ENCODE measurements at regions of chr11 and their contacts with region 1.

Region 1: DNA sequence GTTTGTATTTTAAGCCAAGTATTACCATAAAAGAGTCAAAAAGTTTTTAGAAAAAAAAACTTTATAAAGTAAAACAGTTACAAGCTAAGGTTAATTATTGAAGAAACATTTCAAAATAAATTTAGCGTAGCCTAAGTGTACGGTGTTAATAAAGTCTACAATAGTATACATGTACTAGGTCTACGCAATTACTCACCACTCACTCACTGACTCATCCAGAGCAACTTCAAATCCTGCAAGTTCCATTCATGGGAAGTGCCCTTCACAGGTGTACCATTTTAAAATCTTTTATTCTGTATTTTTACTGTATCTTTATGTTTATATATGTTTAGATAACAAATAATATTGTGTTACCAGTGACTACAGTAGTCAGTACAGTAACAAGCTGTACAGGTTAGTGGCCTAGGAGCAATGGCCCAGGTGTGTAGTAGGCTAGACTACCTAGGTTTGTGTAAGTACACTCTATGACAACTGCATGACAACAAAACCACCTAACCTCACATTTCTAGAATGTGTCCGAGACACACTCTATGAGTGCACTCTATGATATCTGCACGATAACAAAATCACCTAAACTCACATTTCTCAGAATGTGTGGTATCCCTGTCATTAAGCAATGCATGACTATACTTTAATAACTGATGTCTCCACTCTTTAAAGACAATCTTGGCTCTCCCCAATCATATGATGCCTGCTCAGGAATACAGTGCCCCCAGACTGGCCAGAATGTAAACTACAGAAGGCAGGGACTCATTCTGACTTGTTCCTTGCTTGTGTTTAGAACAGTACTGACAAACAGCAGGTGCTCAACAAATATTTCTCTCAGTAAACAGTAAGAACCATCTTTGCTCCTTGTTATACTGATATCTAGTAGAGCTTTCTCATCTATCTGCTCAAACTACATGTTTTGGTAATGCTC is 21.2 kb downstream of the KMT5B start:
- DNase-seq: no peak
- H3K4me3 ChIP-seq: no peak overlapping the region
- H3K27ac ChIP-seq: no peak overlapping the region
- H3K4me1 ChIP-seq: no peaks in the 10 kb centered on the region; a peak in 1 of 4 replicates
- H3K27me3 ChIP-seq: no peaks in the 10 kb centered on the region
- CTCF ChIP-seq: no peak
- EP300 ChIP-seq: no peak
- RAD21 ChIP-seq: no peak

Region 2: GRCh38 chr11:68206187-68206601 is 14.3 kb after region 1 on chr11:
- CTCF ChIA-PET with region 1: interaction called, 19 read pairs
- POLR2A ChIA-PET with region 1: interaction called, 3 read pairs
- DNase-seq: peak; percentile 64
- H3K4me3 ChIP-seq: no peak overlapping the region
- H3K27ac ChIP-seq: no peak overlapping the region
- H3K4me1 ChIP-seq: peaks cover 0 to 12% of the 10 kb centered on the region in 2 experiments; a peak in 2 of 4 replicates
- H3K27me3 ChIP-seq: no peaks in the 10 kb centered on the region
- CTCF ChIP-seq: peak; percentile 78
- EP300 ChIP-seq: no peak
- RAD21 ChIP-seq: peak; percentile 75

Region 3: GRCh38 chr11:68256331-68256741 is 64.4 kb after region 1 on chr11:
- CTCF ChIA-PET with region 1: no interaction called
- POLR2A ChIA-PET with region 1: no interaction called
- DNase-seq: no peak
- H3K4me3 ChIP-seq: no peak overlapping the region
- H3K27ac ChIP-seq: no peak overlapping the region
- H3K4me1 ChIP-seq: peaks cover 0 to 4% of the 10 kb centered on the region in 2 experiments; a peak in 2 of 4 replicates
- H3K27me3 ChIP-seq: no peaks in the 10 kb centered on the region
- CTCF ChIP-seq: no peak
- EP300 ChIP-seq: no peak
- RAD21 ChIP-seq: no peak